ENCODE measurements at regions of chr10 and their contacts with region 1.

Region 1: DNA sequence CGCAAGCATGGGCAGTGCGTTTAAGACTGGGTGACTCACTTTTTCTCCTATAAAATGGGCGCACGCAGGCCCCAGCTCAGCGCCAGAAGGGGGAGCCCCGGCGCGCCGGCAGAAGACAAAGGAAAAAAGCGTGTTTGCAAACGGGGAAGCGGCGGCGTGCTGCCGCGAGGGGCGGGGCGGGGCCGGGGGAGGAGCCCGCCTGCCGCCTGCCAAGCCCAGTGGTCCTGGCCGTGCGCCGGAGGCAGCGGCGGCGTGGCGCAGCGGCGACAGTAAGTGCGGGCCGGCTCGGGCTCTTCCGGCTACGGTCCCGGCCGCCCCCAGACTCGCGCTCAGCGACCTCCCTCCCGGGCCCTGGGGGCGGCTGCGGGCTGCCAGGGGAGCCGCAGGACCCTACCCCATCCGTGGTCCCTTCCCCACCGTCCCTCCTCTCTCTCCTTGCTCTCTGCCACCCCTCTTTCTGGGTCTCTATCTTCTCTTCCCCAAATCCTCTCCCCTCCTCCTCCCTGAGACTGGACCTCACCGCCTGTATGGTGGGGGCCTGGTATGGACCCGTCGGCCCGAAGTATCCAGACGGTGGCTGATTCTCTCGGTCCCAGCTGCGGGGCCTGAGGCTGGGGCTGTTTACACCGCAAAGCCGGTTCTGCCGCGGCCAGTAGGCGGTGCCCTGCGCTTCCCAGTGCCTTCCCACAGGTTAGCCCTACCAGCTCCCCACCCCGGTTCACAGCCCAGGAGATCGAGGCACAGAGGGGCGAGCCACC is at the start of gene SLC29A3:
- DNase-seq: peak; percentile 77
- H3K4me3 Mint-ChIP-seq: peak within 1 kb of the TSS; percentile 98
- H3K27ac Mint-ChIP-seq: no peak within 1 kb of the TSS
- H3K4me1 Mint-ChIP-seq: no peaks in the 10 kb centered on the region
- H3K27me3 Mint-ChIP-seq: no peaks in the 10 kb centered on the region
- CTCF ChIP-seq: peak; percentile 69
- total RNA-seq, gene SLC29A3: 3.6 and 4.0 TPM in 2 replicates

Region 2: DNA sequence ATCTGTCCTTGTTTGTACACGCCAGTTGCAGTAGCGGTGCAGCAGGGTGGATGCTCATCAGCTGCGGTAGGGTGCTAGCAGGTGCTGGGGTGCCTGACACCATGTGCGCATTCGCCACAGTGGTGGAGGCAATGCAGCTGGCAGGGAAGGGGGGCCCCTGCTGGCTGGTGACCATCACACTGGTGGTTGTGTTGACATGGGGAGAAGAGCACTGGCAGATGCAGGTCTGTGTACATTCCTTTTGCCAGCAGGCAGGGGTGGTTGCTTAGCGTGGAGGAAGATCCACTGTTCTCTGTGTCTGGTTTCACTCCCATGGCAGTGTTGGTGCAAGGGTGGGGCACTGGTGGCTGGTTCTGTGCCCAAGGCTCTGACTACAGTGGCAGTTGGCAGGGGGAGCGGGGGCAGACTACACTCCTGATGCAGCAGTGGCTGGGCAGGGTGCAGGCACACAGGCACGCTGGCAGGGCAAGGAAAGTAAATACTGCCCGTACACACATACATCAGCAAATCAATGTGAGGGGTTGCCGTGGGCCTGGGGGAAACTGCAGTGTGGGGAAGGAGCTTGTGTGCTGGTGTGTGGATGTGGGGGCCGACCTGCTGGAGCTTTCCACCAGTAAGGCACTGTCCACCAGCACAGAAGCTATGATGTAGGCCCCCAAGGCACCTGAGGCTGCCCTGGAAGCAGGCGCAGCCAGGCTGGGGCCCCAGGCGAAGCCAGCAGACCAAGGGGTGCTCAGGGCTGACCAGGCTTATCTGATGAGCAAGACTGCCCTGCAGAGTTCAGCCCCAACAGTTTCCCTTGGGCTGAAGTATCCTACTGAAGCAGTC is 194.1 kb before region 1 on chr10:
- CTCF ChIA-PET with region 1: no interaction called
- POLR2A ChIA-PET with region 1: no interaction called
- intact Hi-C with region 1: no loop called
- DNase-seq: no peak
- H3K4me3 Mint-ChIP-seq: no peak overlapping the region
- H3K27ac Mint-ChIP-seq: no peak overlapping the region
- H3K4me1 Mint-ChIP-seq: peaks cover 5% of the 10 kb centered on the region
- H3K27me3 Mint-ChIP-seq: peaks cover 64% of the 10 kb centered on the region
- CTCF ChIP-seq: no peak

Region 3: GRCh38 chr10:71241114-71241898 is 77.9 kb before region 1 on chr10:
- CTCF ChIA-PET with region 1: no interaction called
- POLR2A ChIA-PET with region 1: no interaction called
- intact Hi-C with region 1: no loop called
- DNase-seq: no peak
- H3K4me3 Mint-ChIP-seq: peak overlapping the region; percentile 19
- H3K27ac Mint-ChIP-seq: peak overlapping the region; percentile 63
- H3K4me1 Mint-ChIP-seq: peaks cover 47% of the 10 kb centered on the region
- H3K27me3 Mint-ChIP-seq: no peaks in the 10 kb centered on the region
- CTCF ChIP-seq: no peak

Region 4: GRCh38 chr10:71302874-71303568 is 16.2 kb before region 1 on chr10:
- CTCF ChIA-PET with region 1: interaction called, 19 read pairs
- POLR2A ChIA-PET with region 1: no interaction called
- intact Hi-C with region 1: no loop called
- DNase-seq: peak; percentile 67
- H3K4me3 Mint-ChIP-seq: no peak overlapping the region
- H3K27ac Mint-ChIP-seq: no peak overlapping the region
- H3K4me1 Mint-ChIP-seq: no peaks in the 10 kb centered on the region
- H3K27me3 Mint-ChIP-seq: no peaks in the 10 kb centered on the region
- CTCF ChIP-seq: peak; percentile 30

Region 5: GRCh38 chr10:71351628-71352319 is 32.6 kb after region 1 on chr10:
- CTCF ChIA-PET with region 1: interaction called, 51 read pairs
- POLR2A ChIA-PET with region 1: interaction called, 7 read pairs
- intact Hi-C with region 1: no loop called
- DNase-seq: no peak
- H3K4me3 Mint-ChIP-seq: no peak overlapping the region
- H3K27ac Mint-ChIP-seq: no peak overlapping the region
- H3K4me1 Mint-ChIP-seq: peaks cover 25% of the 10 kb centered on the region
- H3K27me3 Mint-ChIP-seq: no peaks in the 10 kb centered on the region
- CTCF ChIP-seq: no peak

Region 6: GRCh38 chr10:71378336-71379117 is 59.3 kb after region 1 on chr10:
- CTCF ChIA-PET with region 1: interaction called, 17 read pairs
- POLR2A ChIA-PET with region 1: interaction called, 20 read pairs
- intact Hi-C with region 1: loop called (anchors 1 kb)
- DNase-seq: no peak
- H3K4me3 Mint-ChIP-seq: no peak overlapping the region
- H3K27ac Mint-ChIP-seq: no peak overlapping the region
- H3K4me1 Mint-ChIP-seq: peaks cover 7% of the 10 kb centered on the region
- H3K27me3 Mint-ChIP-seq: no peaks in the 10 kb centered on the region
- CTCF ChIP-seq: no peak

Region 7: GRCh38 chr10:71569775-71570588 is 250.8 kb after region 1 on chr10:
- CTCF ChIA-PET with region 1: interaction called, 169 read pairs
- POLR2A ChIA-PET with region 1: interaction called, 7 read pairs
- intact Hi-C with region 1: loop called (anchors 1 kb)
- DNase-seq: peak; percentile 73
- H3K4me3 Mint-ChIP-seq: no peak overlapping the region
- H3K27ac Mint-ChIP-seq: no peak overlapping the region
- H3K4me1 Mint-ChIP-seq: no peaks in the 10 kb centered on the region
- H3K27me3 Mint-ChIP-seq: peaks cover 19% of the 10 kb centered on the region
- CTCF ChIP-seq: peak; percentile 74

Region 8: DNA sequence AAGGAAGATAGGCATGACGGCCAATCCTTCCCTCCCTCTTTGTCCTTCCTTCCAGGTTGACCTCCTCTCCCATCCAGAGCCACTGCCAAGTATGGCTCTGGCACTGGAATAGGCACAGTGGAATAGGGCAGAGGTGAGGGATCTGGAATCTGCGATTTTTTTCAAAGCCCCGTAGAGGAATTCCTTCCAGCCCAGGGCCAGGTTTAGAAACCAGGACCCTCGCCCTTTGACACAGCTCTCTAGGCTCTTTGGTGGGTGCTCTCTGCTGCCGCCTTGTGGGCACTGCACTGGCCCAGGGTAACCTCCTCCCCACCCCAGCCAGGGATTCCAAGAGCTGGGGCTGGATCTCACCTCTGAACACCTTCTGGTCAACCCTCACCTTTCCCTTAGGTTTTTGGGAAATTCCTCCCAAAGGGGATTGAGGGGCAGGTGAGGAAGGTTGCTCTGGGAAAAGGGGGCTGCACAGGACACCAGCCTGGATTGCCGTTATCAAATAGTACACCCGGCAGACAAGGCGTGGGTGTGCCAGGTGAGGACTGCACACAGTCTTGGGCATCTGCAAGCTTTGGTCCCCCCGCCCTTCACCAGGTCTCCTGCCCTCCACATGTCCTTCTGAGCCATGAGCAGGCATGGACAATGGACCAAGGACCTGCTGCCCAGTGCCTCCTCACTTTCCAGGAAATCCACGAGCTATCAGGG is 377.6 kb after region 1 on chr10:
- CTCF ChIA-PET with region 1: interaction called, 14 read pairs
- POLR2A ChIA-PET with region 1: interaction called, 4 read pairs
- intact Hi-C with region 1: loop called (anchors 5 kb)
- DNase-seq: peak; percentile 65
- H3K4me3 Mint-ChIP-seq: no peak overlapping the region
- H3K27ac Mint-ChIP-seq: no peak overlapping the region
- H3K4me1 Mint-ChIP-seq: no peaks in the 10 kb centered on the region
- H3K27me3 Mint-ChIP-seq: no peaks in the 10 kb centered on the region
- CTCF ChIP-seq: peak; percentile 84

Region 9: GRCh38 chr10:71727738-71728737 is 408.8 kb after region 1 on chr10:
- CTCF ChIA-PET with region 1: no interaction called
- POLR2A ChIA-PET with region 1: no interaction called
- intact Hi-C with region 1: no loop called
- DNase-seq: peak; percentile 70
- H3K4me3 Mint-ChIP-seq: no peak overlapping the region
- H3K27ac Mint-ChIP-seq: peak overlapping the region; percentile 42
- H3K4me1 Mint-ChIP-seq: peaks cover 18% of the 10 kb centered on the region
- H3K27me3 Mint-ChIP-seq: no peaks in the 10 kb centered on the region
- CTCF ChIP-seq: no peak

Region 10: GRCh38 chr10:71893920-71894319 is 574.7 kb after region 1 on chr10:
- CTCF ChIA-PET with region 1: interaction called, 11 read pairs
- POLR2A ChIA-PET with region 1: no interaction called
- intact Hi-C with region 1: loop called (anchors 10 kb)
- DNase-seq: no peak
- H3K4me3 Mint-ChIP-seq: no peak overlapping the region
- H3K27ac Mint-ChIP-seq: no peak overlapping the region
- H3K4me1 Mint-ChIP-seq: peaks cover 7% of the 10 kb centered on the region
- H3K27me3 Mint-ChIP-seq: no peaks in the 10 kb centered on the region
- CTCF ChIP-seq: no peak

Measured in MCF 10A (cell line).